ENCODE measurements at regions of chr10 and their contacts with region 1.

Region 1: DNA sequence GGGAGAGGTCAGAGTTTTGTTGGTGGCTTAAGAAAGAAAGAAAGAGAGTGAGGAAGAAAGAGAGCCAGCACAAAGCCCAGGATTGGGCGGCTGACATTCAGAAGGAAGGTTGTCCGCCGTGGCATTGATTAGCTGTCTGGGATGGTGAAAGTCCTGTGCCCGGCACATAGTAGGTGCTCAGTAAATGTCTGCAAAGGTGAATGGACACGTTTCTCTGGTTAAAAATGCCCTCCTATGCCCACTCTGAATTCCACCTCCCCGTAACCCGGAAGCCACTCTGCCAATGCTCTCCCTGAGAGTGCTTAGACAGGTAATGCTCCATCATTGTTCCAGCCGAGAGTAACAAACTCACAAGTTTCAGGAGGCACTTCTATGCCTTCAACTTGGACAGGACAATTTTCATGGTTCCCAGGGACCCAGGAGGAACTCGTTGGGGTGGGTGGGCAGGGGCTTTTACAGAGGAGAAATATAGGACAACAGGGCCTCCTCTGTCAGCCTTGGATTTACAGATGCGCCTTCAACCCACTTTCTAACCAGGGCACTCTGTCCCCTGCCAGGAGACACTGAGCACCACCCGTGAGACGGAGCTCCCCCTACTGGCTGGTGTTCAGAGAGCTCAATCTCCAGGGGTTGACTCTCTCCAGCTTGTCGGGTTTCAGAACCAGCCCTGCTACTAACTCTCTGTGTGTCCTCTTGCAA is 411.5 kb upstream of the ZMIZ1 start:
- DNase-seq: peak; percentile 99
- ATAC-seq: peak; percentile 99
- H3K4me3 ChIP-seq: no peak overlapping the region
- H3K27ac ChIP-seq: no peak overlapping the region
- H3K4me1 ChIP-seq: no peaks in the 10 kb centered on the region
- H3K27me3 ChIP-seq: peaks cover 11% of the 10 kb centered on the region
- CTCF ChIP-seq: peak; percentile 98

Region 2: DNA sequence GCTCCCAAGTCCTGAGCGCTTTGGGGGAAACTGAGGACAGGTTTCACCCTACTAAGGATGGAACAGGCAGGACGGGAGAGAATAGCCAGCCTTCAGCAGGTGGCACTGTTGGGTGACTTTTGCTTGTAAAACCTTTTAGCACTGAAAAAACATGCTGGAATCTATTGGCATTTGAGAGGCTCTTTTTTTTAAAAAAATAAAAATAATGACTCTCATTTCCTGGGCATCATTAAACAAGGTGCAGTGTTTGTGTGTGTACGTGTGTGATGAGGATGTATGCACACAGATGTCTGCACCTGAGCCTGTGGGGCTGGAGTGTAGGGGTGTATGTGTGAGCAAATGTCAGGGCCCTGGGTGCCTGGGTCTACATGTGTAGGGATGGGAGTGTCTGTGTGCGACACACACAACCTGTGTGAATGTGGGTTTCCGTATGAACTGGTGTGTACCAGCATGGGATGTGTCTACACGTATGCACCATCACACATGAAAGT is 445.7 kb before region 1 on chr10:
- CTCF ChIA-PET with region 1: no interaction called
- POLR2A ChIA-PET with region 1: no interaction called
- intact Hi-C with region 1: loop called (anchors 1 kb)
- DNase-seq: peak; percentile 92
- ATAC-seq: peak; percentile 66
- H3K4me3 ChIP-seq: no peak overlapping the region
- H3K27ac ChIP-seq: no peak overlapping the region
- H3K4me1 ChIP-seq: no peaks in the 10 kb centered on the region
- H3K27me3 ChIP-seq: peaks cover 69% of the 10 kb centered on the region
- CTCF ChIP-seq: peak; percentile 100

Region 3: DNA sequence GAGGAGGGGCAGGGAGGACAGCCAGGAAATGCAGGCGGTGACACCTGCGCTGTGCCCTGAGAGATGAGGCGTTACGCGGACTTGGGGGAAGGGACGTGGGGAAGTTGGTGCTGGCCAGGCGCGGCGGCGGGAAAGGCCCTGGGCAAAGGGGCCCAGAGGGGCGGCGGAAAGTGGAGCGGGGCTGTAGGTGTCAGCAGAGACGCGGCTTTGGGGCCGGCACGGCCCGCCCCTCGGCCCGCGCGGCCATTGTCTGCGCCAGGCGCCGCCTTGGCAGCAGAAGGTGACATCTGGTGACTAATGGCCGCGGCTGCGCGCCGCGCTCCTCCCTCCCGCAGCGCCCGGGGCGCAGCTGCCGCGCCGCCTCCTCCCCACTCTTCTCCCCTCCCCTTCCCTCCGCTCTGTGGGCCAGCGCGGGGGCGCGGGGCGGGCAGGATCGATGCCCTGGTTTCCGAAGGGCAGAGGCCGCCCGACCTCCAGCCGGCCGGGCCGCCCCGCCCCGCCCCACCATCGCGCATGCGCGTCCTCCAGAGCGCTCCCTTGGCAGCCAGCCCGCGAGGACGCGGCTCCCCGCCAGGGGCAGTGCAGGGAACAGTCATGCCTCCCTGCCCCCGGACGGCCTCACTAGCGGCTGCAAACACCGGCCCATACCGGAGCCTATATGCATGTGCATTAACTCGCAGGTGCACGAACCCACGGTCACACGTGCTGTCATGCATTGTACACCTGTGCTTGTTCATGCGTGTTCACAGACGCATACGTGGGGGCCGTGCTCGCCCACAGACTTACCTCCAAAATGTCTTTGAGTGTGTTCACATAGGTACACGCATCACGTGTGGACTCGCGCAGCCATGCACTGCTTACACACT is 354.1 kb before region 1 on chr10:
- CTCF ChIA-PET with region 1: no interaction called
- POLR2A ChIA-PET with region 1: no interaction called
- intact Hi-C with region 1: loop called (anchors 5 kb)
- DNase-seq: peak; percentile 100
- ATAC-seq: peak; percentile 91
- H3K4me3 ChIP-seq: peak overlapping the region; percentile 67
- H3K27ac ChIP-seq: peak overlapping the region; percentile 11
- H3K4me1 ChIP-seq: peaks cover 14% of the 10 kb centered on the region
- H3K27me3 ChIP-seq: peaks cover 36% of the 10 kb centered on the region
- CTCF ChIP-seq: peak; percentile 93

Region 4: GRCh38 chr10:78339251-78339650 is 318.1 kb before region 1 on chr10:
- CTCF ChIA-PET with region 1: no interaction called
- POLR2A ChIA-PET with region 1: no interaction called
- intact Hi-C with region 1: no loop called
- DNase-seq: no peak
- ATAC-seq: no peak
- H3K4me3 ChIP-seq: no peak overlapping the region
- H3K27ac ChIP-seq: no peak overlapping the region
- H3K4me1 ChIP-seq: no peaks in the 10 kb centered on the region; the same call in 1 of the 2 replicates
- H3K27me3 ChIP-seq: peaks cover 62% of the 10 kb centered on the region
- CTCF ChIP-seq: no peak

Region 5: GRCh38 chr10:78432583-78432982 is 224.7 kb before region 1 on chr10:
- CTCF ChIA-PET with region 1: interaction called, 6 read pairs
- POLR2A ChIA-PET with region 1: no interaction called
- intact Hi-C with region 1: loop called (anchors 1 kb)
- DNase-seq: peak; percentile 69
- ATAC-seq: peak; percentile 79
- H3K4me3 ChIP-seq: no peak overlapping the region
- H3K27ac ChIP-seq: no peak overlapping the region
- H3K4me1 ChIP-seq: peaks cover 13% of the 10 kb centered on the region
- H3K27me3 ChIP-seq: peaks cover 39% of the 10 kb centered on the region
- CTCF ChIP-seq: peak; percentile 78

Region 6: GRCh38 chr10:78491812-78492211 is 165.5 kb before region 1 on chr10:
- CTCF ChIA-PET with region 1: no interaction called
- POLR2A ChIA-PET with region 1: no interaction called
- intact Hi-C with region 1: no loop called
- DNase-seq: peak; percentile 95
- ATAC-seq: peak; percentile 92
- H3K4me3 ChIP-seq: no peak overlapping the region
- H3K27ac ChIP-seq: peak overlapping the region; percentile 2; the same call in 1 of the 2 replicates
- H3K4me1 ChIP-seq: peaks cover 11% of the 10 kb centered on the region; the same call in 1 of the 2 replicates
- H3K27me3 ChIP-seq: peaks cover 7% of the 10 kb centered on the region
- CTCF ChIP-seq: no peak

Region 7: DNA sequence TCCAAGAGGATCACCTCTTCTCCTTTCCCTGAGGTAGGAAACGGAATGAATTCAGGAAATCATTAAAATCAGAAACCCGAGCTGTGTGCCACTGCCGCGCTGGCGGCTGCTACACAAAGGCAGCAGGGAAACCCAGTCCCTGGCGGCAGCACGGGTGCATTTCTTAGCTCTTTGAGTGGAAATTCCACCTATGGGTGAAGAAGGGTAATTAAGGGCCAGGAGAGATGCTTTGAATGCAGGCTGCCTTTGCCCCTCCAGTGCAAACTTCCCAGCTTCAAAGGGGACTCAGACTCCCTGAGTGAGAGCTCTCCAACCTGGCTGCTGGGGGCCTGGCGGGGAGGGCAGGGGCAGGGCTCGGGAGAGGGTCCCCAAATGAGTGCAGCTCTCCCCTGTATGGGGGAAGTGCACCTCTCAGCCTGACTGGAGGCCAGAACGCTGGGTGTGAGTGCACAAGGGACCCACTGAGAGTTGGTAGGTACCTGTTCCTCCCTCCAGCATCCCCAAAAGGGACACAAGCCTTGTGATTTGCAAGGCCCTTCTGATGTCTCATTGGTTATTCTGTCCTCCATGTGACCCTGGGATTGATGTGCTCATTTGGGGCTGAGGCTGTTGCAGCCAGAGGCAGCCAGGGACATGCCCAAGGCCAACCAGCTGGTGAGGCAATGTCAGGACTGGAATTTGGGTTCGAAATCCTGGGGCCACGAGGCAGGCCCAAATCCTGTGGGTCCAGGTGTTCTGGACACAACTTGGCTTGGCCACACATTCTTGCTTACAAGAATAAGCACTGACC is 395.2 kb after region 1 on chr10:
- CTCF ChIA-PET with region 1: interaction called, 10 read pairs
- POLR2A ChIA-PET with region 1: no interaction called
- intact Hi-C with region 1: no loop called
- DNase-seq: peak; percentile 89
- ATAC-seq: peak; percentile 75
- H3K4me3 ChIP-seq: no peak overlapping the region
- H3K27ac ChIP-seq: no peak overlapping the region
- H3K4me1 ChIP-seq: peaks cover 27% of the 10 kb centered on the region
- H3K27me3 ChIP-seq: no peaks in the 10 kb centered on the region
- CTCF ChIP-seq: peak; percentile 91